ENCODE measurements at regions of chr16 and their contacts with region 1.

Region 1: GRCh38 chr16:3305109-3306068 is at the starts of genes TIGD7 and ZNF75A:
- DNase-seq: peak; percentile 69 to 89 (median 85)
- ATAC-seq: peak; percentile 96
- H3K4me3 ChIP-seq: peak within 1 kb of the TSS; percentile 78
- H3K4me3 Mint-ChIP-seq: peak within 1 kb of the TSS; percentile 78 to 87 (median 84)
- H3K27ac ChIP-seq: peak within 1 kb of the TSS; percentile 87
- H3K27ac Mint-ChIP-seq: peak within 1 kb of the TSS; percentile 62 to 92 (median 83)
- H3K4me1 ChIP-seq: peaks cover 12 to 13% of the 10 kb centered on the region in 2 donors
- H3K4me1 Mint-ChIP-seq: peaks cover 4 to 38% (median 19%) of the 10 kb centered on the region in 7 donors
- H3K27me3 ChIP-seq: no peaks in the 10 kb centered on the region
- H3K27me3 Mint-ChIP-seq: no peaks in the 10 kb centered on the region
- total RNA-seq, gene TIGD7: 4.9 to 18.4 (median 5.5) TPM
- total RNA-seq, gene ZNF75A: 27.7 to 90.6 (median 53.4) TPM

Region 2: DNA sequence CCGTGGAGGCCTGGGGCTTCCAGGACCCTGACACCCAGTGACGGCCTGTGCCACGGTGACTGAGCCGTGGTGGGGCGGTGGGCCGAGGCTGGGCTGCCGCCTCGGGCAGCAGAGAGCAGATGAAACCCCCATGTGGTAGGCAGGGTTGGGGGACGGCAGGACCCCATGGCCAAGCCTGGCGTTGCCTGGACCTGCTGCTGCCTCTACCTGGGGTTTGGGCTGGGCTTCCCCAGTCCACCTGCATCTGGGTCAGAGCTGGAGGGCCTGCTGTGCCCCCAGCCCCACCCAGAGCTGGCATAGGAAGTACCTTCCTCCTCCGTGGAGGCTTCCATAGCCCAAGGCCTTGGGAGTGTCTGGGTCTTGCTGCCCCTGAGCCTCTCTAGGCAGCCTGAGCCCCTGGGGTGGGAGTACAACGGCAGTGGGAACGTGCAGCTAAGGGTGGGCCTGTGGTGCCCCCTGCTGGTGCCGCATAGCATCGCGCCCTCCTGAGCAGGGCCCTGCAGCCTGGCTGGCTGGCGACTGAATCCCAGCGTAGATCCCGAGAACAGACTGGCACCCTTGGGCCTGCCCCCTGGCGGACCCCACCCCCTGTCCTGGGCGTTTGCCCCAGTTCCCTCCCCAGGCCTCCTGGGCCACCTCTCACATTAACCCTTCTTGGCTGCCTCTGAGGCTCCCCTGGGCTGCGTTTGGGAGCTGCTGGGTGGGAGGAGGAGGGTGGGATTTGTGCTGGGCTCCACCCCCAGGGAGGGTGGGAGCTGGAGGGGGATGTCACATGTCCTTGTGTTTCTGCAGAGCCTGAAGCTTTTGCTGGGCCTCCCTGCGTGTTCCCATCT is 804.3 kb before region 1 on chr16:
- CTCF ChIA-PET with region 1: no interaction called
- POLR2A ChIA-PET with region 1: no interaction called
- intact Hi-C with region 1: no loop called
- DNase-seq: peak; percentile 64 to 85 (median 74)
- ATAC-seq: peak; percentile 97
- H3K4me3 ChIP-seq: no peak overlapping the region
- H3K4me3 Mint-ChIP-seq: no peak overlapping the region
- H3K27ac ChIP-seq: no peak overlapping the region
- H3K27ac Mint-ChIP-seq: no peak overlapping the region
- H3K4me1 ChIP-seq: no peaks in the 10 kb centered on the region
- H3K4me1 Mint-ChIP-seq: peaks cover 0 to 3% (median 0%) of the 10 kb centered on the region in 7 donors
- H3K27me3 ChIP-seq: no peaks in the 10 kb centered on the region
- H3K27me3 Mint-ChIP-seq: no peaks in the 10 kb centered on the region

Region 3: DNA sequence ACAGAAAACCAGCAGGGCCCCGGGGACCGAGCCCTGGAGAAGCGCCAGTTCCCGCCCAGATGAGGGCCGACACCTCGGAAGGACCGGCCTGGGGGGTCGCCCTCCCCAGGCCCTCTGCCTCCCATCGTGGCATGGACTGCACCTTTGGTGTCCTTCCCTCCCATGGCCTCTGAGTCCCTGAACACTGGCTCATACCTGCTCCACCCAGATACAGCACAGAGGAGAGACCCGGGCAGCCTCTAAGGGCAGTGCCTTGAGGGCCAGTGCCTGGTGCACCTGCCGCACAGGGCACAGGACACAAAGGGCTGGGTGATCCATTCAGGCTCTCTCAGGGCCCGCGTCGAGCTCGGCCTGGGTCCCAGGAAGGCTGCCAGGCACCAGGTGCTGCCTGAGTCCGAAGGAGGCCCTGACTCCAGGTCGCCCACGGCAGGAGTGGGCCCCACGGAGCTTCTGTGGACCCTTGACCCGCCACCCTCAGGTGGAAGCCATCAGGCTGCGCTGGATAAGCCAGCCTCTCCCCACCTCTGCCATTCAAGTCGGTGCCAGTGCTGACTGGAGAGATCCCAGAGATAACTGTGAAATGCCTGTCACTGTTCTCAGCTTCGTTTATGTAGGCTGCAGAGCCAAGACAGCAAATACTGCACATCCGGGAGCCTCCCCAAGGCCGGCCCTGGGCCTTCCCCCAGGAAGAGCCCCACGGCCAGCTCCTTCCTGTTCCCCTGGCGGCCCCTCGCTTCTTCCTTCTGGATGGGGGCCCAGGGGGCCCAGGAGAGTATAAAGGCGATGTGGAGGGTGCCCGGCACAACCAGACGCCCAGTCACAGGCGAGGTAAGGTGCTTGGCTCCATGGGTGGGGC is 475.7 kb before region 1 on chr16 and contains the start of gene ZG16B:
- CTCF ChIA-PET with region 1: no interaction called
- POLR2A ChIA-PET with region 1: no interaction called
- intact Hi-C with region 1: no loop called
- DNase-seq: no peak
- ATAC-seq: no peak
- H3K4me3 ChIP-seq: no peak within 1 kb of the TSS
- H3K4me3 Mint-ChIP-seq: peak within 1 kb of the TSS in 1 of 10 donors; percentile 55
- H3K27ac ChIP-seq: no peak within 1 kb of the TSS
- H3K27ac Mint-ChIP-seq: peak within 1 kb of the TSS in 1 of 9 donors; percentile 82
- H3K4me1 ChIP-seq: no peaks in the 10 kb centered on the region
- H3K4me1 Mint-ChIP-seq: peaks cover 0 to 6% (median 0%) of the 10 kb centered on the region in 7 donors
- H3K27me3 ChIP-seq: no peaks in the 10 kb centered on the region
- H3K27me3 Mint-ChIP-seq: peaks cover 0 to 8% (median 2%) of the 10 kb centered on the region in 5 donors
- total RNA-seq, gene ZG16B: 2.3 to 17.2 TPM in 2 of 5 experiments, not detected in the others

Region 4: GRCh38 chr16:3234543-3235541 is 70.5 kb before region 1 on chr16 and contains the start of gene ZNF200:
- CTCF ChIA-PET with region 1: no interaction called
- POLR2A ChIA-PET with region 1: no interaction called
- intact Hi-C with region 1: loop called (anchors 1 kb)
- DNase-seq: peak; percentile 85 to 96 (median 94)
- ATAC-seq: peak; percentile 94
- H3K4me3 ChIP-seq: peak within 1 kb of the TSS; percentile 98
- H3K4me3 Mint-ChIP-seq: peak within 1 kb of the TSS; percentile 88 to 97 (median 94)
- H3K27ac ChIP-seq: peak within 1 kb of the TSS; percentile 90
- H3K27ac Mint-ChIP-seq: peak within 1 kb of the TSS; percentile 93 to 98 (median 97)
- H3K4me1 ChIP-seq: peaks cover 18 to 23% of the 10 kb centered on the region in 2 donors
- H3K4me1 Mint-ChIP-seq: peaks cover 20 to 48% (median 39%) of the 10 kb centered on the region in 7 donors
- H3K27me3 ChIP-seq: no peaks in the 10 kb centered on the region
- H3K27me3 Mint-ChIP-seq: peaks cover 0 to 3% (median 0%) of the 10 kb centered on the region in 5 donors
- total RNA-seq, gene ZNF200: 4.8 to 33.3 (median 16.6) TPM

Region 5: DNA sequence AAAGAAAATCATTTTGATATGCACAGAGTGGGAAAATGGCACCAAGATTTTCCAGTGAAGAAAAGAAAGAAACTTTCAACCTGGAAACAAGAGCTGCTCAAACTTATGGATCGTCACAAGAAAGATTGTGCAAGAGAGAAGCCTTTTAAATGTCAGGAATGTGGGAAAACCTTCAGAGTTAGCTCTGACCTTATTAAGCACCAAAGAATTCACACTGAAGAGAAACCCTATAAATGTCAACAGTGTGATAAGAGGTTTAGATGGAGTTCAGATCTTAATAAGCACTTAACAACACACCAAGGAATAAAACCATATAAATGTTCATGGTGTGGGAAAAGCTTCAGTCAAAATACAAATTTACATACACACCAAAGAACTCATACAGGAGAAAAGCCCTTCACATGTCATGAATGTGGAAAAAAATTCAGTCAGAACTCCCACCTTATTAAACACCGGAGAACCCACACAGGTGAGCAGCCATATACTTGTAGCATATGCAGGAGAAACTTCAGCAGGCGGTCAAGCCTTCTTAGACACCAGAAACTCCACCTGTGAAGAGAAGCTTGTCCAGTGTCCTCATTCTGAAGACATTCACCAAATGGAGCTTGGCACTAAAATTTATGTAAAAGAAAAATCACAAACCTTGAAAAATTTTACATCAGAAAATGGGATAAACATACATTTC is 12.1 kb after region 1 on chr16:
- CTCF ChIA-PET with region 1: interaction called, 3 read pairs
- POLR2A ChIA-PET with region 1: interaction called, 24 read pairs
- intact Hi-C with region 1: no loop called
- DNase-seq: peak in 1 of 9 donors; percentile 5
- ATAC-seq: no peak
- H3K4me3 ChIP-seq: peak overlapping the region; percentile 5
- H3K4me3 Mint-ChIP-seq: no peak overlapping the region
- H3K27ac ChIP-seq: no peak overlapping the region
- H3K27ac Mint-ChIP-seq: no peak overlapping the region
- H3K4me1 ChIP-seq: no peaks in the 10 kb centered on the region
- H3K4me1 Mint-ChIP-seq: peaks cover 0 to 4% (median 0%) of the 10 kb centered on the region in 7 donors
- H3K27me3 ChIP-seq: no peaks in the 10 kb centered on the region
- H3K27me3 Mint-ChIP-seq: no peaks in the 10 kb centered on the region

Region 6: GRCh38 chr16:3364774-3365427 is 59.5 kb after region 1 on chr16:
- CTCF ChIA-PET with region 1: no interaction called
- POLR2A ChIA-PET with region 1: interaction called, 7 read pairs
- intact Hi-C with region 1: loop called in 1 of 2 experiments (anchors 1 kb)
- DNase-seq: peak; percentile 50 to 92 (median 87)
- ATAC-seq: peak; percentile 93
- H3K4me3 ChIP-seq: peak overlapping the region; percentile 70
- H3K4me3 Mint-ChIP-seq: peak overlapping the region; percentile 37 to 92 (median 84)
- H3K27ac ChIP-seq: peak overlapping the region; percentile 79
- H3K27ac Mint-ChIP-seq: peak overlapping the region; percentile 73 to 96 (median 91)
- H3K4me1 ChIP-seq: peaks cover 0 to 6% of the 10 kb centered on the region in 2 donors
- H3K4me1 Mint-ChIP-seq: peaks cover 0 to 19% (median 12%) of the 10 kb centered on the region in 7 donors
- H3K27me3 ChIP-seq: no peaks in the 10 kb centered on the region
- H3K27me3 Mint-ChIP-seq: peaks cover 0 to 30% (median 21%) of the 10 kb centered on the region in 5 donors

Region 7: DNA sequence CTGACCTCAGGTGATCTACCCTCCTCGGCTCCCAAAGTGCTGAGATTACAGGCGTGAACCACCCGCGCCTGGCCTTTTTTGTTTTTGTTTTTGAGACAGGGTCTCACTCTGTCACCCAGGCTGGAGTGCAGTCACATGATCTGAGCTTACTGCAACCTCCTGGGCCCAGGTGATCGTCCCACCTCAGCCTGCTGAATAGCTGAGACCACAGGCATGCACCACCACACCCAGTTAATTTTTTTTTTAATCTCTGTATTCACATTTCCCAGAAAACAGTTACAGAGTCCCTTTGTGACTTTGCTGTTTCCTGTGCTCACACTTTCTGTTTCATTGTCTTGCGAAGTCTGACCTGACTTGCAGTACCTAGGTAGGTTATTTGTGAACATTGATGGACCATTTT is 198.1 kb after region 1 on chr16:
- CTCF ChIA-PET with region 1: no interaction called
- POLR2A ChIA-PET with region 1: interaction called, 4 read pairs
- intact Hi-C with region 1: loop called (anchors 1 kb)
- DNase-seq: peak in 8 of 9 donors; percentile 50 to 81 (median 70)
- ATAC-seq: peak; percentile 49
- H3K4me3 ChIP-seq: peak overlapping the region; percentile 3
- H3K4me3 Mint-ChIP-seq: peak overlapping the region; percentile 76 to 94 (median 84)
- H3K27ac ChIP-seq: peak overlapping the region; percentile 92
- H3K27ac Mint-ChIP-seq: peak overlapping the region; percentile 90 to 98 (median 95)
- H3K4me1 ChIP-seq: peaks cover 40 to 47% of the 10 kb centered on the region in 2 donors
- H3K4me1 Mint-ChIP-seq: peaks cover 37 to 80% (median 67%) of the 10 kb centered on the region in 7 donors
- H3K27me3 ChIP-seq: no peaks in the 10 kb centered on the region
- H3K27me3 Mint-ChIP-seq: no peaks in the 10 kb centered on the region